Caco-2 (cell line): ENCODE measurements at regions of chr1 and their contacts with region 1.

Region 1: DNA sequence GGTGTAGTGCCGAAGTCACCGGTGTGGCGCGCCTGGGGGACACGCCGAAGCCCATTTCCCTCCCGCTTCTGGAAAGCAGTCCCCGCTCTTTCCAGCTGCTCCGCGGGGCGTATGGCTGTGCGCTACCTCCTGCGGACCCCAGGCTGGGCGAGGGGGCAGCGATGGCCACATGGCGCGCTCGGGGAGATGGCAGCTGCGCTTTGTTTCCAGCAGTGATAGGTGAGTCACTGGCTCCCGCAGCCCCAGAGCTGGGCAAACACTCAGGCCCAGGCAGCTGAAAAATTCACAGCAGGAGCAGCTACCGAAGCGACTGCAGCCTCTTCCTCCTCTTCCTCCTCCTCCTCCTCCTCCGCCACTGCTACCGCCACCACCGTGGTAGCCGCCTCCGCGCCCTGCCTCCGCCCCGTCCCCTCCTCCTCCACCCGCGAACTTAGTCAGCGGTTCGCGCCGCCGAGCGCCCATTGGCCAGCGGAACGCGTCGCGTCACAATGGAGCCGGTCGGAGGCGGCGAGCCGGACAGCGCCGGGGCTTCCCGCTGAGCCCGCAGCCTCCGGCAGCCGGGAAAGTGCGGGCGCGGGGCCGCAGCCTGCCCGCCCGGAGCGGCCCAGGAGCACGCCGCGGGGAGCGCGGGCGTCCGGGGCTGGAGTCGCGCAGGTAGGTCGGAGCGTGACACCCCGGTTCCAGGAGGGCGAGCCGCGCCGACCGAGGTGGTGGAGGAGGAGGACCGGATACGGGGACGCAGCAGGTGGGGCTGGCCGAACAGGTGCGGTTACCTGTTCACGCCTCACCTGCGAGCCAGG is at the start of gene LRRC8B:
- DNase-seq: peak; percentile 82 to 84
- H3K4me3 ChIP-seq: peak within 1 kb of the TSS; percentile 63
- H3K4me3 Mint-ChIP-seq: peak within 1 kb of the TSS; percentile 89
- H3K27ac Mint-ChIP-seq: peak within 1 kb of the TSS; percentile 89
- H3K4me1 ChIP-seq: peaks cover 6% of the 10 kb centered on the region; the same call in 1 of the 2 replicates
- H3K4me1 Mint-ChIP-seq: no peaks in the 10 kb centered on the region
- H3K27me3 ChIP-seq: no peaks in the 10 kb centered on the region
- H3K27me3 Mint-ChIP-seq: no peaks in the 10 kb centered on the region
- CTCF ChIP-seq: no peak
- total RNA-seq, gene LRRC8B: 8.4 and 10.8 TPM in 2 replicates

Region 2: DNA sequence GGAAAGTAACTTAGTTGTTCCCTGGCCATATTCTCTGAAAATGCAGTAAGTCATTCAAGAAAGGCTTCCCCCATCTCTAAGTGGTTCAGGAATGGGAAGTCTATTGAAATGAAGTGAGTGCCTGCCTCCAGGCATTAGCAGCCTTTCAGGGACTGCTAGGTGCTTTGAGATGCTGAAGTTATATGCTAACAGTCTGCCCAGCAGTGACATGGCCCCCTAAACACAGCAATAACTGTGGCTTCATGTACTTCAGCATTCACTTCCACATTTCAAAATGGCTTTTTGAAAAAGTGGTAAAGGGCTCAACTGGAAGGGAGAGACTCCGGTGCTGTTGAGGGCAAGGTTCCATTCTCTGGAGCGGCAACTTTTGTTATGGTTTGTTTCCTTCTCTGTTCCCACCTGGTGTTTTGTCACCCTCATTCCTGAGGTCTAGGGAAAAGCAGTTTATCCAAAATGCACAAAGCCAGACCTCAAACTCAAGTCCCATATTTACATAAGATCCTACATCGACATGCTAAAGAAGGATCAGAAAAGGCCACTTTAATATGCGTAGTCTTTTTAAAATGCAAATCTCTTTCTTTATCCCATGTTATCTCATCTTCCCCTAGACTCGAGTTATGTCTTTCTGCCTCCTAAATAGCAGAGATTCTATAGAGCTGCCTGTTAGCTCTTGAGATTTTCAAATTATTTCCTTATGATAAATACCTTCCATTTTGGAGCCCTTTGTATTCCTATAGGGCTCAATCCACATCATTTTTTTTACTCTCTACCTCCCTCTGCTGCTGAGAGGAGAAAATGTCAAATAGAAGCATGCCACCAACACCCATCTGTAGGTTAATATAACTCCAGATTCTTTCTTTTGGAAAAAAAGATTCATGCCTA is 74.1 kb after region 1 on chr1:
- CTCF ChIA-PET with region 1: no interaction called
- POLR2A ChIA-PET with region 1: no interaction called
- intact Hi-C with region 1: loop called (anchors 1 kb)
- DNase-seq: peak in 1 of 2 experiments; percentile 21
- H3K4me3 ChIP-seq: no peak overlapping the region
- H3K4me3 Mint-ChIP-seq: no peak overlapping the region
- H3K27ac Mint-ChIP-seq: no peak overlapping the region
- H3K4me1 ChIP-seq: no peaks in the 10 kb centered on the region
- H3K4me1 Mint-ChIP-seq: no peaks in the 10 kb centered on the region
- H3K27me3 ChIP-seq: no peaks in the 10 kb centered on the region
- H3K27me3 Mint-ChIP-seq: no peaks in the 10 kb centered on the region
- CTCF ChIP-seq: peak; percentile 35 to 46

Region 3: GRCh38 chr1:89762779-89763648 is 238.4 kb after region 1 on chr1:
- CTCF ChIA-PET with region 1: no interaction called
- POLR2A ChIA-PET with region 1: no interaction called
- intact Hi-C with region 1: loop called (anchors 10 kb)
- DNase-seq: peak; percentile 70 to 77
- H3K4me3 ChIP-seq: peak overlapping the region; percentile 30
- H3K4me3 Mint-ChIP-seq: peak overlapping the region; percentile 75
- H3K27ac Mint-ChIP-seq: no peak overlapping the region
- H3K4me1 ChIP-seq: no peaks in the 10 kb centered on the region
- H3K4me1 Mint-ChIP-seq: no peaks in the 10 kb centered on the region
- H3K27me3 ChIP-seq: no peaks in the 10 kb centered on the region
- H3K27me3 Mint-ChIP-seq: peaks cover 3% of the 10 kb centered on the region
- CTCF ChIP-seq: peak; percentile 78 to 84

Region 4: DNA sequence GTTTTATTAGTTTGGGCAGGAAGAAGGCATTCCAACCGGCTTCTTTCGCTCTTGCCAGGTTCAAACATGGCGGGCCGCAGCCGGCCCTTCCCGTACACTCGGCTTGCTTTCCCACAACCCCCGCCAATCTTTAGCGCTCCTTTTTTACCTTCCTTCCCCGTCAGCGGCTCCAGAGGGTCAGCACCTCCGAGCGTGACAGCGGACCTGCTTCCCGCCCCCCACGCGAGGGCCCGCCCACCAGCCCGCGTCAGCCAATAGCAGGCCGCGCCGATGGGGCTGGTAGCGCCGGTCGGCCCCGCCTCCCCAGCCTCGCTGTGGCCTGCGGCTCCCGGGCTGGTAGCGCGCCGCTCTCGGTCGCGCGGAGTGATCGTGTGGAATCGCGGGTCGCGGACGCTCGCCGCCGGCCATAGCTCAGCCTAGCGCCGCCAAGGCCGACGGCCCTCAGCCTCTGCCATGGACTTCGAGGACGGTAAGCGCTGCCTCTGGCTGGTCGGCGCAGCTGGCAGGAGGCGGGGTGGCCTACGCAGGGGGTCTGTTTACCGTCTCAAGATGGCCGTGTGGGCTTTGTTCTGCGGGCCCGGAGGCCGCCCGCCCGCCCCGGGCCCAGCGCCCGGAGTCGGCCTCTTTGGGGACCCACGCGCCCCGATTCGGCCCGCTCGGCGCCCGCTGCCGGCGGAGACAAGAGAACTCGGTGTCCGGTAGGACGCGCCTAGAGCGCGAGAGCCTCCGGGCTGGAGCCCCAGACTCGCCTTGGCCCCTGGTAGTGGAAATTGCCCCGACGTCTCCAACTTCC is 470.4 kb after region 1 on chr1 and contains the start of gene ZNF326:
- CTCF ChIA-PET with region 1: no interaction called
- POLR2A ChIA-PET with region 1: no interaction called
- intact Hi-C with region 1: loop called (anchors 10 kb)
- DNase-seq: peak; percentile 97
- H3K4me3 ChIP-seq: peak within 1 kb of the TSS; percentile 82
- H3K4me3 Mint-ChIP-seq: peak within 1 kb of the TSS; percentile 80
- H3K27ac Mint-ChIP-seq: peak within 1 kb of the TSS; percentile 87
- H3K4me1 ChIP-seq: peaks cover 36% of the 10 kb centered on the region
- H3K4me1 Mint-ChIP-seq: peaks cover 23% of the 10 kb centered on the region
- H3K27me3 ChIP-seq: no peaks in the 10 kb centered on the region
- H3K27me3 Mint-ChIP-seq: no peaks in the 10 kb centered on the region
- CTCF ChIP-seq: no peak
- total RNA-seq, gene ZNF326: 31.7 and 32.3 TPM in 2 replicates